ENCODE measurements at regions of chr10 and their contacts with region 1.

Region 1: GRCh38 chr10:14604181-14605142 is 170.2 kb downstream of the FAM107B start:
- DNase-seq: peak; percentile 72
- ATAC-seq: peak; percentile 55
- H3K4me3 Mint-ChIP-seq: peak overlapping the region; percentile 86
- H3K27ac Mint-ChIP-seq: peak overlapping the region; percentile 94
- H3K4me1 Mint-ChIP-seq: peaks cover 68% of the 10 kb centered on the region
- H3K27me3 Mint-ChIP-seq: no peaks in the 10 kb centered on the region
- CTCF ChIP-seq: no peak

Region 2: DNA sequence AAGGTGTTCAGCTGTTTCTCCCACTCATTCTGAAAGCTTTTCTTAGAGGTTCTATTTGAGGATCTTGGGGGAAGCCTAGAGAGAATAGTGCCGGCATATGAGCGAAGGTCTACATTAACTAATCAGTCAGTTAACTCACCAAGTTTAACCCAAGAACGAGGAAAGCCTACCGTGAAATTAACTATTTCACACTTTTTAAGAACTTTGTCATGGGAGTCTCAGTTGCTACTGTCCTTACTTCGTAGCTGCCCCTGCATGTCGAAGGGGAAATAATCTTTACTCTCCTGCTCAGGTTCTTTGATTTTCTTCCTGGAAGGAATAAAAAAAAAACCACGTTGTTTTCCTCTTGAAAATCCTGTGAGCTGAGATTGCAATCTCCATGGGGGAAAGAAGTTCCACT is 388.8 kb before region 1 on chr10:
- CTCF ChIA-PET with region 1: no interaction called
- POLR2A ChIA-PET with region 1: no interaction called
- intact Hi-C with region 1: no loop called
- DNase-seq: no peak
- ATAC-seq: no peak
- H3K4me3 Mint-ChIP-seq: no peak overlapping the region
- H3K27ac Mint-ChIP-seq: no peak overlapping the region
- H3K4me1 Mint-ChIP-seq: peaks cover 2% of the 10 kb centered on the region
- H3K27me3 Mint-ChIP-seq: peaks cover 28% of the 10 kb centered on the region
- CTCF ChIP-seq: no peak

Region 3: GRCh38 chr10:14414901-14415300 is 189.6 kb before region 1 on chr10:
- CTCF ChIA-PET with region 1: no interaction called
- POLR2A ChIA-PET with region 1: no interaction called
- intact Hi-C with region 1: no loop called
- DNase-seq: no peak
- ATAC-seq: no peak
- H3K4me3 Mint-ChIP-seq: no peak overlapping the region
- H3K27ac Mint-ChIP-seq: no peak overlapping the region
- H3K4me1 Mint-ChIP-seq: peaks cover 7% of the 10 kb centered on the region
- H3K27me3 Mint-ChIP-seq: peaks cover 25% of the 10 kb centered on the region
- CTCF ChIP-seq: no peak

Region 4: DNA sequence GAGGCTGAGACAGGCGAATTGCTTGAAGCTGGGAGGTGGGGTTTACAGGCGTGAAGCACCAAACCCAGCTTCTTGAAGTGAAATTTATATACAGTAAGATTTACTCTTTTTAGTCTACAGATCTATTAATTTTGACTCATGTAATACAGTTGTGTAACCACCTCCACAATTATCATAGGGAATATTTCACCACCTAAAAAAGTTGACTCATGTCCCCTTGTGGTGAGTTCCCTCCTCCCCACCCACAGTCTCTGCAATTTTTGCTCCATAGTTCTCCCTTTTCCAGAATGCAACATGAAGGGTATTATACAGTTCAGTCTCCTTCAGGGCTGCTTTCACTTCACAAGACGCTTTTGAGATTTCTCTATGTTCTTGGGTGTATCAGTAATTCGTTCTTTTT is 13.4 kb after region 1 on chr10:
- CTCF ChIA-PET with region 1: no interaction called
- POLR2A ChIA-PET with region 1: interaction called, 10 read pairs
- intact Hi-C with region 1: loop called (anchors 1 kb)
- DNase-seq: no peak
- ATAC-seq: no peak
- H3K4me3 Mint-ChIP-seq: no peak overlapping the region
- H3K27ac Mint-ChIP-seq: no peak overlapping the region
- H3K4me1 Mint-ChIP-seq: peaks cover 25% of the 10 kb centered on the region
- H3K27me3 Mint-ChIP-seq: no peaks in the 10 kb centered on the region
- CTCF ChIP-seq: no peak

Region 5: GRCh38 chr10:14659626-14660196 is 55.2 kb after region 1 on chr10:
- CTCF ChIA-PET with region 1: no interaction called
- POLR2A ChIA-PET with region 1: interaction called, 6 read pairs
- intact Hi-C with region 1: loop called (anchors 1 kb)
- DNase-seq: no peak
- ATAC-seq: peak; percentile 68
- H3K4me3 Mint-ChIP-seq: peak overlapping the region; percentile 78
- H3K27ac Mint-ChIP-seq: peak overlapping the region; percentile 94
- H3K4me1 Mint-ChIP-seq: peaks cover 85% of the 10 kb centered on the region
- H3K27me3 Mint-ChIP-seq: no peaks in the 10 kb centered on the region
- CTCF ChIP-seq: no peak

Region 6: DNA sequence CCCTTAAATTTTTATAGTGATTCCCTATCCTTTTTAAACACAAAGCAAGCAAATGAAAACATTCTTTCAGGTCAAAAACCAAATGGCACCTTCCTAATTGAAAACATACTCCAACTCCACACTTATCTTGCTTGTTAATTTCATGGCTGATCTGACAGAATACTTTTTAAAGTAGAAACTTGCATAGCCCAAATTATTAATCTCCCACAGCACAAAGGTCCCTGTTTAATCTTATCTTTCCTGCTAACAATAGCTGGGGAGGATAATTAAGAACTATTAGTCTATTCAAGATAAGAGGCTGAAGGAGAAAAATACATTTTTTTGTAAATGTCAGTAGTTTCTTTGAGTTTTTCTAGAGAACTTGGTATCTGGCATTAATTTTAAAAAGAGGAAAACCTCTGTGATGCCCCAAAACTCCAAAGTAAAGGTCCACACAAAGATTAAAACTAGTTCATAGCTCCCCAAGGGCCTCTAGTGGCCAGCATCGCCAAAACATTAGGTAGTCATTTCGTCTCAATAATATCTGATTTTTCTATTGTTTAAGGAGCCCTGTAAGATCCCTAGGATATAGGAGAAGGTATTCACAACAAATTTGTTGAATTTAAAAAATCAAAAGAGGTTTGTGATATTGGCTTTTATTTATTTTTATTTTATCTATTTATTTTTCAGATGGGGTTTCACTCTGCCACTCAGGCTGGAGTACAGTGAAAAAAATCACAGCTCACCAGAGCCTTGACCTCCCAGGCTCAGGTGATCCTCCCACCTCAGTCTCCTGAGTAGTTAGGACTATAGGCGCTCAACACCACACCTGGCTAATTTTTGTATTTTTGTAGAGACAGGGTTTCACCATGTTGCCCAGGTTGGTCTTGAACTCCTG is 218.7 kb after region 1 on chr10:
- CTCF ChIA-PET with region 1: interaction called, 8 read pairs
- POLR2A ChIA-PET with region 1: interaction called, 7 read pairs
- intact Hi-C with region 1: loop called (anchors 1 kb)
- DNase-seq: no peak
- ATAC-seq: peak; percentile 74
- H3K4me3 Mint-ChIP-seq: no peak overlapping the region
- H3K27ac Mint-ChIP-seq: peak overlapping the region; percentile 26
- H3K4me1 Mint-ChIP-seq: peaks cover 24% of the 10 kb centered on the region
- H3K27me3 Mint-ChIP-seq: no peaks in the 10 kb centered on the region
- CTCF ChIP-seq: peak; percentile 25

Region 7: DNA sequence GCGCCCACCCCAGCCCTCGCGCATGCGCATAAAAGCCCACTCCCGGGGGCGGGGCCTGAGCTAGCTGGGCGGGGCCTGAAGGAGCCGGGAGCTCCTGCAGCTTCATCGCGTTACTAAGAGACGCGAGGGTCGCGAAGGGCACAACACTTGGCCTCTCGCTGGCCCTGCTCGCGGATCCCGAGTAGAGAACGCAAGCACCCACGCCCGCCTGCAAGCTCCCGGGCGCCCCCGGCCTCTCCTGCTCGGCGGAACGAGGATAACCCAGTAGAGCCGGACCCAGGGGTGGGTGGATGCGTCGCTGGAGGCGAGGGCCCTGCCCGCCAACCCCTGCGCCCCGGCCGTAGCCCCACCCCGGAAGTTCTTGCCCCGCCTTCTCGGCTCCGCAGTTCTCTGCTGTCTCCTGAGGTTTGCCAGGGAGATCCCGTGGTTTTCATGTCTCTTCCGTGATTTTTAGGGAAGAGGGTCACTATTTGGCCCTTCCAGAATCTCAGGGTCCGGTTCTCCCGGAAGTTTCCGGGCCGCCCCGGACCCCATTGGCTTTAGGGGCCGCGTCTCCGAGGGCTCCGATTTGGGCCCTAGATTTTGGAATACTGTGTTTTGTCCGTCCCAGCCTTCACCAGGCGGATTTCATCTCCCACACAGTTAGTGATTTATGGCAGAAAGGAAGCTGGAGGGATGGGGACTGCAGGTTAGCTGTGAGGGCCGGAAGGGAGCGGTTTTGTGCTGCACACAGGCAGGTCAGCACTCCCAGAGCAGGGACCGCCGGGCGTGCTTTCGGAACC is 355.0 kb after region 1 on chr10 and contains the start of gene MEIG1:
- CTCF ChIA-PET with region 1: no interaction called
- POLR2A ChIA-PET with region 1: no interaction called
- intact Hi-C with region 1: loop called (anchors 2 kb)
- DNase-seq: peak; percentile 100
- ATAC-seq: peak; percentile 83
- H3K4me3 Mint-ChIP-seq: peak within 1 kb of the TSS; percentile 97
- H3K27ac Mint-ChIP-seq: peak within 1 kb of the TSS; percentile 98
- H3K4me1 Mint-ChIP-seq: peaks cover 14% of the 10 kb centered on the region
- H3K27me3 Mint-ChIP-seq: no peaks in the 10 kb centered on the region
- CTCF ChIP-seq: no peak
- total RNA-seq, gene MEIG1: 0.49 and 0.54 TPM in 2 replicates

Measured in activated B cell treated with CpG ODN at 0.5 μM for 24 hours (primary cell).